Panc1 (cell line): ENCODE measurements at regions of chr17 and their contacts with region 1.

Region 1: DNA sequence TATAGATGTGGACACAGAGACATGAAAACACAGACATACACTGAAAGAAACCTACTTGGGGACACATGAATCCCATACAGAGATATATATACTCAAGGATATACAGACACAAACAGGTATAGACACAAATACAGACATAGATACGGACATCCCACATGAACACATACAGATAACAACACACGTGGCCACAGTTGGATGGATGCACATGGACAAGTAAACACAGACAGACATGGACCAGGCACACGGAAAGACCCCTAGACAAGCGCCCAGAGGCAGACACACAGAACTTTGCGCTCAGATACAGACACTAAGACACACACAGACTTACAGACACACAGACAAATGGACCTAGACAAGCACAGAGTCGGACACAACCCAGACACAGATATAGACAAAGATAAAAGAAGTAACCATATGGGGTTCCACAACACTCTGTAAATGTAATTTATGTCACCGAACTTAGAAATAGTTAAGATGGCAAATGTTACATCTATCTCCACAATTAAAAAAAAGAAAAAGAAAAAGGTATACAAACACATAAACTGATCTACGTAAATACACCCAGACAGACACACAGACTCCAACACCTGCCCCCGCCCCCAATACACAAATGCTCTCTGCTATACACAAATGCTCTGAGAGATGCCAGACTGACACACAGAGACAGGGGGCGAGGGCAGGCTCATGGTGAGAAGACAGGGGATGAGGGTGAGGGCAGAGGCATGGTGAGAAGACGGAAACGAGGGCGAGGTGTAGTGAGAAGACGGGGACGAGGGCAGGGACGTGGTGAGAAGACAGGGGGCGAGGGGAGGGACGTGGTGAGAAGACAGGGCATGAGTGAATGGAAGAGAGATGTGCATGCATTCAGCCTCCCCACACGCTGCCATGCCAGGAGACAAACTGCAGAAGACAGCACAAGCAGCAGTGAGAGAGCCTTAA is 118.3 kb downstream of the SMG6 start:
- DNase-seq: no peak
- ATAC-seq: no peak
- H3K4me3 ChIP-seq: no peak overlapping the region
- H3K27ac ChIP-seq: no peak overlapping the region
- H3K4me1 ChIP-seq: no peaks in the 10 kb centered on the region
- H3K27me3 ChIP-seq: no peaks in the 10 kb centered on the region
- CTCF ChIP-seq: no peak

Region 2: GRCh38 chr17:2172077-2172851 is 13.0 kb before region 1 on chr17:
- CTCF ChIA-PET with region 1: no interaction called
- POLR2A ChIA-PET with region 1: no interaction called
- in situ Hi-C with region 1: no loop called
- intact Hi-C with region 1: no loop called
- DNase-seq: no peak
- ATAC-seq: no peak
- H3K4me3 ChIP-seq: no peak overlapping the region
- H3K27ac ChIP-seq: no peak overlapping the region
- H3K4me1 ChIP-seq: no peaks in the 10 kb centered on the region
- H3K27me3 ChIP-seq: no peaks in the 10 kb centered on the region
- CTCF ChIP-seq: no peak

Region 3: DNA sequence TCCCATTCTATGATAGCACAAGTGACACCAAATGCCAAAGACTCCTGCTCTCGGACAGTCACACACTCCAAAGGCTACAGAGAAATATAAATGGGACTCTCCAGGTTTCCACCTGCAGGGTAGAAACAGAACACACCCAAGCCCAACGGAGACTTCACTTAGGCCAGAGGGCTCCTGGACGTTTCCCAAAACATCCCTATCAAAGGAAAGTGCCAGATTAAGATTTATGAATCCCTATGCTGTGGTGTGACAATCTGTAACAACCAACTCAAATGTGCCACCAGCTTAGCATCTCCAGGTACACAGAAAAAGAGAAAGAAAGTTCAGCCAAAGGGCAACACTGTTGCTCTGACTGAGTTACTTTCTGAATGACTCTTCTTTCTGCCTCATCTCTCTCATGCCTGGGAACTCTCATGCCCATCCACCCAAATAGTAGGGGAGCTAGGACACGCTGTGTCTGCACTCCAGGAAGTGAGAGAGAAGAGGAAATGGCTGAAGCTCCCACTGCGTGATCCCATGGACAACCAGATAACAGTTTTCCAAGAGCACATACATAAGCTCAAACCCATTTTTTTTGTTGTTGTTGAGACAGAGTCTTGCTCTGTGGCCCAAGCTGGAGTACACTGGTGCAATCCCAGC is 68.6 kb after region 1 on chr17:
- CTCF ChIA-PET with region 1: interaction called, 10 read pairs
- POLR2A ChIA-PET with region 1: no interaction called
- in situ Hi-C with region 1: no loop called
- intact Hi-C with region 1: no loop called
- DNase-seq: no peak
- ATAC-seq: no peak
- H3K4me3 ChIP-seq: no peak overlapping the region
- H3K27ac ChIP-seq: no peak overlapping the region
- H3K4me1 ChIP-seq: no peaks in the 10 kb centered on the region
- H3K27me3 ChIP-seq: no peaks in the 10 kb centered on the region
- CTCF ChIP-seq: no peak